IMR-90 (cell line): ENCODE measurements at regions of chr16 and their contacts with region 1.

Region 1: GRCh38 chr16:31157136-31157535 is 7.3 kb upstream of the PRSS36 start:
- DNase-seq: no peak
- ATAC-seq: no peak
- H3K4me3 ChIP-seq: no peak overlapping the region
- H3K27ac ChIP-seq: no peak overlapping the region
- H3K4me1 ChIP-seq: no peaks in the 10 kb centered on the region
- H3K27me3 ChIP-seq: peaks cover 2% of the 10 kb centered on the region
- CTCF ChIP-seq: no peak
- POLR2A ChIP-seq: no peak
- RAD21 ChIP-seq: no peak

Region 2: GRCh38 chr16:31094424-31095120 is 62.6 kb before region 1 on chr16 and contains the start of gene VKORC1:
- CTCF ChIA-PET with region 1: no interaction called
- POLR2A ChIA-PET with region 1: no interaction called
- dilution Hi-C with region 1: no loop called
- in situ Hi-C with region 1: no loop called
- intact Hi-C with region 1: no loop called
- DNase-seq: peak; percentile 97
- ATAC-seq: peak; percentile 96
- H3K4me3 ChIP-seq: peak within 1 kb of the TSS; percentile 91
- H3K27ac ChIP-seq: peak within 1 kb of the TSS; percentile 63
- H3K4me1 ChIP-seq: peaks cover 3% of the 10 kb centered on the region
- H3K27me3 ChIP-seq: no peaks in the 10 kb centered on the region
- CTCF ChIP-seq: no peak
- POLR2A ChIP-seq: no peak
- RAD21 ChIP-seq: no peak
- total RNA-seq, gene VKORC1: 61.9 and 65.2 TPM in 2 replicates

Region 3: GRCh38 chr16:31105677-31106213 is 51.4 kb before region 1 on chr16:
- CTCF ChIA-PET with region 1: no interaction called
- POLR2A ChIA-PET with region 1: no interaction called
- dilution Hi-C with region 1: no loop called
- in situ Hi-C with region 1: no loop called
- intact Hi-C with region 1: loop called (anchors 2 kb)
- DNase-seq: no peak
- ATAC-seq: peak; percentile 74
- H3K4me3 ChIP-seq: no peak overlapping the region
- H3K27ac ChIP-seq: peak overlapping the region; percentile 43
- H3K4me1 ChIP-seq: peaks cover 5% of the 10 kb centered on the region
- H3K27me3 ChIP-seq: no peaks in the 10 kb centered on the region
- CTCF ChIP-seq: peak; percentile 61
- POLR2A ChIP-seq: no peak
- RAD21 ChIP-seq: peak; percentile 35; the same call in 1 of the 2 replicates